ENCODE measurements at regions of chr17 and their contacts with region 1.

Region 1: DNA sequence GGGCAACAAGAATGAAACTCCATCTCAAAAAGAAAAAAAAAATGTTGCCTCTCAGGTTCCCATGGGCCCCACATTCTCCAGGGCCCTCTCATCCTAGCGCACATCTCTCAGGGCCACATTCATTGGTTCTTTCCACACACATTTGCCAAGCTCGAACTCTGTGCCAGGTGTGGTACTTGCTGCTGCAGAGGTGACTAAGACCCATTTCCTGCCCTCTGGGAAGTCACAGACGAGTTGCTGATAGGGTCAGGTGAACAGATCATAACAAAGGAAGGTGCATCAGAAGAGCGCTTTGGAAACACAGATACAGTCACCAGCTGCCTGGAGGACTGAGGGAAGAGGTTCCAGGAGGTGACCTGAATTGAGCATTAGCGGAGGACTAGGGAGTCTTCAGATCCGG is 1.0 kb downstream of the GSDMA start:
- DNase-seq: no peak
- H3K4me3 ChIP-seq: no peak overlapping the region
- H3K27ac ChIP-seq: no peak overlapping the region
- H3K4me1 ChIP-seq: no peaks in the 10 kb centered on the region
- H3K27me3 ChIP-seq: no peaks in the 10 kb centered on the region
- CTCF ChIP-seq: no peak
- EP300 ChIP-seq: no peak
- POLR2A ChIP-seq: no peak

Region 2: GRCh38 chr17:39916918-39917317 is 46.9 kb before region 1 on chr17:
- intact Hi-C with region 1: loop called in 1 of 4 experiments (anchors 10 kb)
- DNase-seq: no peak
- H3K4me3 ChIP-seq: no peak overlapping the region
- H3K27ac ChIP-seq: no peak overlapping the region
- H3K4me1 ChIP-seq: no peaks in the 10 kb centered on the region
- H3K27me3 ChIP-seq: no peaks in the 10 kb centered on the region
- CTCF ChIP-seq: no peak
- EP300 ChIP-seq: no peak
- POLR2A ChIP-seq: no peak

Region 3: GRCh38 chr17:39980351-39981206 is 16.8 kb after region 1 on chr17 and contains the start of gene PSMD3:
- intact Hi-C with region 1: loop called in 1 of 4 experiments (anchors 2 kb)
- DNase-seq: peak; percentile 96 to 99 (median 98)
- H3K4me3 ChIP-seq: peak within 1 kb of the TSS; percentile 80
- H3K27ac ChIP-seq: peak within 1 kb of the TSS; percentile 42 to 65
- H3K4me1 ChIP-seq: peaks cover 1% of the 10 kb centered on the region
- H3K27me3 ChIP-seq: no peaks in the 10 kb centered on the region
- CTCF ChIP-seq: peak; percentile 75 to 96 (median 91)
- EP300 ChIP-seq: no peak
- POLR2A ChIP-seq: peak; percentile 93
- total RNA-seq, gene PSMD3: 48.2 to 88.4 (median 75.8) TPM

Region 4: DNA sequence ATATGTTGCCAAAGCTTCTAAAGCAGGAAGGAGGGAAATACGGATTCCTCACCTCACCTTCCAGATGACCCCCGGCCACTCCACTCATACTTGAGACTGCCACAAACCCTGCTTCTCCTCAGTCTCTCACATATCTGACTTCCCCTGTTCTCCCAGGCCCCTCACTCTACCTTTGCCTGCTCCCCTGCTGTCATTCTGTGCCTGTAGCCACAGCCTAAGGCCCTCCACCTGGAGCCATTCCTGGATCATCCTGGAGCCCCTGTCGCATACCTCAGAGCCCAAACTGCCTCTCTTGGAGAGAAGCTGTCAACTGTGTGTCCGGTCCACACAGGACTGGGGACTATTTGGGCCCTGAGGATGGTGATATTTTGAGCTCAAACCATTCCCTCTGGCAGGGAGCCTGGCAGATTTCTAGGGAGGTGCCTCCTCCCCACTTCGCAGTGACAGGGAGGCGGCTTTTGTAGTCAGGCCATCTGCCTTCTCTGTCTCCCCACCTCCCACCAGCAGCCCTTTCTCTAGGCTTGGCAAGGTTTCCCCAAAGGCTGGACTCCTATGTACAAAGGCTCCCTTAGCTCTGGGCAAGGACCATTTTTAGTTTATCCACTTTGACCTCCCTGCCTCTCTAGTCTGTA is 92.7 kb after region 1 on chr17:
- intact Hi-C with region 1: no loop called
- DNase-seq: no peak
- H3K4me3 ChIP-seq: no peak overlapping the region
- H3K27ac ChIP-seq: no peak overlapping the region
- H3K4me1 ChIP-seq: no peaks in the 10 kb centered on the region
- H3K27me3 ChIP-seq: no peaks in the 10 kb centered on the region
- CTCF ChIP-seq: no peak
- EP300 ChIP-seq: no peak
- POLR2A ChIP-seq: no peak

Measured in ovary (tissue), 10 donors.